Activated T-helper 2 cell treated with anti-CD3 and anti-CD28 coated beads, Interferon-gamma antibody, Interleukin-2, Interleukin-4, amounts not matched to agents 10 μg/mL and 5 μg/mL and 100 μg/mL, durations not matched to agents 14 hours and 24 hours and 36 hours (primary cell): ENCODE measurements at regions of chr11 and their contacts with region 1.

Region 1: GRCh38 chr11:17384002-17384511 is 4.4 kb downstream of the KCNJ11 start:
- DNase-seq: peak; percentile 61
- H3K4me3 Mint-ChIP-seq: no peak overlapping the region
- H3K27ac Mint-ChIP-seq: no peak overlapping the region
- H3K4me1 Mint-ChIP-seq: no peaks in the 10 kb centered on the region
- H3K27me3 Mint-ChIP-seq: peaks cover 16% of the 10 kb centered on the region

Region 2: DNA sequence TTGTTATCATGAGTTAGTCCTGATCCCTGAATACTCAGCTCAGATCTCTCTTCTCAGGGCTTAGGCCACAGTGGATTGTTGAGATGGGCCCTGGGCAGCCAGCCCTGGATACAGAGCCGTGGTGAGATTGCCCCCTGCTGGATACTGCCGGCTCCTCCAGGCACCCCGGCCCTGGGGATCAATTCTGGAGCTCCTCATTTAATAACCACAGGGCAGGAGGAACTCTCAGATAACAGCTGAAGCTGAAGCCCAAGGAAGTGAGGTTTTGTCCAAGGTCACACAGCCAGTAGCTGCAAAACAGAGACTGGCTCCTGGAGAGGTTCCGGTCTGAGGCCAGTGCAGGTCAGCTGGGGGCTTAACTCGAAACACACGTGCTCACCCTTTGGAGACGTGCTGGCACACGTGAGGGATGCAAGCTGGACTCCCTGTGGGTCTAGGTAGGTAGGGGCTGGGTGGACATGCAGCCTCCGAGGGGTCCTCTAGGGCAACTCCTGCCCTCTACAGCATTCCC is 144.2 kb after region 1 on chr11:
- intact Hi-C with region 1: loop called (anchors 1 kb)
- DNase-seq: peak; percentile 34
- H3K4me3 Mint-ChIP-seq: no peak overlapping the region
- H3K27ac Mint-ChIP-seq: no peak overlapping the region
- H3K4me1 Mint-ChIP-seq: no peaks in the 10 kb centered on the region
- H3K27me3 Mint-ChIP-seq: peaks cover 4% of the 10 kb centered on the region